Caco-2 (cell line): ENCODE measurements at regions of chr10 and their contacts with region 1.

Region 1: GRCh38 chr10:103192451-103193106 is 493 bp downstream of the NT5C2 start:
- DNase-seq: peak; percentile 80 to 84
- H3K4me3 ChIP-seq: peak overlapping the region; percentile 67
- H3K4me3 Mint-ChIP-seq: peak overlapping the region; percentile 94
- H3K27ac Mint-ChIP-seq: peak overlapping the region; percentile 98
- H3K4me1 ChIP-seq: peaks cover 20% of the 10 kb centered on the region
- H3K4me1 Mint-ChIP-seq: peaks cover 20% of the 10 kb centered on the region
- H3K27me3 ChIP-seq: no peaks in the 10 kb centered on the region
- H3K27me3 Mint-ChIP-seq: no peaks in the 10 kb centered on the region
- CTCF ChIP-seq: no peak

Region 2: DNA sequence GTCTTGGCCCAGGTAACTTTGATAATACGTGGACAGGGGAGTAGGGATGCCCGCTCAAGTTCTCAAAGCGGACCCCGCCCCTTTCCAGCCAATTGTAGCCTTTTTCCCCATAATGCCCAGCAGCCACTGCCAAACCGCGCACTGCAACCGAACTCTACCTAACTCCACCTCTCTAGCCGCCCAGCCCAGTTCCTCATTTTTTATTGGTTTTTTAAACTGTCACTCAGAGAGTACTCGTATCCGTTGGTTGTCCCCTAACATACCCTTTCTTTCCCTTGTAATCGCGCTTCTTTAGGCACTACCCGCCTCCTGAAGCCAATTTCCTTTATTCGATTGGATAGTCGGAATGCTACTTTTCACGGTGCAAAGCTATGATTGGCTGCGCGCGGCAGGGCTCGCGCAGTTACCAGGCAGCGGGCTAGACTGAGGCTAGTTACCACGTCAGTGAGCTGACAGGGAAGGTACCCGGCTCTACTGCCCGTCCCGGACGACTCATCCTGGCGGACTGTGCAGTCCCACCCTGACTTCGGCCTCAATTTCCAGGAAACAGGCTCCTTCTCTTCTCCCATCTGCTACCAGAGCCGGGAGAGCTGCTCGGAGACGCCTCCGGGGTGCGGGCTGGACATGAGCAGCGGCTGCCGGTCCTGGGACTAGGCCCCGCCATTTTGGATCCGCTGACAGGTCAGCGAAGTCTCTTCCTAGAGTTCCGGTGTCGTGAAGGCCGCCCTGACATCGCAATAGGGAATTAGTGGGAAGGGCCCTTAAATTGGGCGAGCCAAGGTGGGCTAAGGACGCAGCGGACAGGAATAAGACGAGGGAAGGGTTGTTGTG is 947.3 kb before region 1 on chr10 and contains the start of gene GBF1:
- CTCF ChIA-PET with region 1: no interaction called
- POLR2A ChIA-PET with region 1: no interaction called
- intact Hi-C with region 1: no loop called
- DNase-seq: peak; percentile 96 to 97
- H3K4me3 ChIP-seq: peak within 1 kb of the TSS; percentile 73
- H3K4me3 Mint-ChIP-seq: peak within 1 kb of the TSS; percentile 94
- H3K27ac Mint-ChIP-seq: peak within 1 kb of the TSS; percentile 87
- H3K4me1 ChIP-seq: peaks cover 19% of the 10 kb centered on the region
- H3K4me1 Mint-ChIP-seq: peaks cover 46% of the 10 kb centered on the region
- H3K27me3 ChIP-seq: no peaks in the 10 kb centered on the region
- H3K27me3 Mint-ChIP-seq: peaks cover 3% of the 10 kb centered on the region
- CTCF ChIP-seq: no peak
- total RNA-seq, gene GBF1: 69.1 and 69.8 TPM in 2 replicates

Region 3: GRCh38 chr10:103231047-103231551 is 38.5 kb after region 1 on chr10:
- CTCF ChIA-PET with region 1: interaction called, 6 read pairs
- POLR2A ChIA-PET with region 1: interaction called, 42 read pairs
- intact Hi-C with region 1: loop called (anchors 1 kb)
- DNase-seq: peak; percentile 81 to 89
- H3K4me3 ChIP-seq: no peak overlapping the region
- H3K4me3 Mint-ChIP-seq: peak overlapping the region; percentile 37
- H3K27ac Mint-ChIP-seq: peak overlapping the region; percentile 72
- H3K4me1 ChIP-seq: peaks cover 55% of the 10 kb centered on the region
- H3K4me1 Mint-ChIP-seq: peaks cover 23% of the 10 kb centered on the region
- H3K27me3 ChIP-seq: no peaks in the 10 kb centered on the region
- H3K27me3 Mint-ChIP-seq: no peaks in the 10 kb centered on the region
- CTCF ChIP-seq: no peak

Region 4: DNA sequence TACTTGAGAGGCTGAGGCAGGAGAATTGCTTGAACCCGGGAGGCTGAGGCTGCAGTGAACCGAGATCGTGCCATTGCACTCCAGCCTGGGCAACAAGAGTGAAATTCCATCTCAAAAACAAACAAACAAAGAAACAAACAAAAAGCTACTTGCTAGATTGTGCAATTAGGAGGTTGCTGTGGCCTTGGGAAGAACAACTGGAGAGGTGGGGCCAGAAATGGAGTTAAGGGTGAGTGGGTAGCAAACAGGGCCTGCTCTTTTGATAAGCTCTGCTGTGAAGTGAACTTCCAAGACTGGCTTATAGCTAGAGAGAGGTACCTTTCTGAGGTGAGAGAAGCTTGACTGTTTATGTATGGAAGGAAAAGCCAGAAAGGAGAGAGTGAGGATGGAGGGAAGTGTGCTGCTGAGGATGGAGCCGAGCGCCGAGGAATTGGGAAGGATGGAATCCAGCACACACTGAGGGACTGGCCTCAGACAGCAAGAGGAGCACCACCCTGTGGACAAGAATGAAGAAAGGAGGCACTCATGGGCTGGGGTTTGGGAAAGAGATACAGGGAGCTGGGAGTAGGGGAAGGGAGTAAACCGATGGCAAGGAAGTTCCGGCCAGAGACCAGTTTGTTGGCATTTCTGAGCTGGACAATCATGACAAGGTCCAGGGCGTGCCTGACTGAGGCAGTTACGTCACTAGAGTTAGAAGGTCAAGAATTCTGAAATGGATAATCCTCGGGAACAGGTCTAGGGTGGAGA is 46.1 kb after region 1 on chr10:
- CTCF ChIA-PET with region 1: interaction called, 27 read pairs
- POLR2A ChIA-PET with region 1: interaction called, 17 read pairs
- intact Hi-C with region 1: loop called (anchors 1 kb)
- DNase-seq: peak; percentile 92 to 96
- H3K4me3 ChIP-seq: no peak overlapping the region
- H3K4me3 Mint-ChIP-seq: peak overlapping the region; percentile 52
- H3K27ac Mint-ChIP-seq: peak overlapping the region; percentile 88
- H3K4me1 ChIP-seq: peaks cover 46% of the 10 kb centered on the region
- H3K4me1 Mint-ChIP-seq: peaks cover 35% of the 10 kb centered on the region
- H3K27me3 ChIP-seq: no peaks in the 10 kb centered on the region
- H3K27me3 Mint-ChIP-seq: no peaks in the 10 kb centered on the region
- CTCF ChIP-seq: peak; percentile 12 to 60